ENCODE measurements at regions of chr5 and their contacts with region 1.

Region 1: DNA sequence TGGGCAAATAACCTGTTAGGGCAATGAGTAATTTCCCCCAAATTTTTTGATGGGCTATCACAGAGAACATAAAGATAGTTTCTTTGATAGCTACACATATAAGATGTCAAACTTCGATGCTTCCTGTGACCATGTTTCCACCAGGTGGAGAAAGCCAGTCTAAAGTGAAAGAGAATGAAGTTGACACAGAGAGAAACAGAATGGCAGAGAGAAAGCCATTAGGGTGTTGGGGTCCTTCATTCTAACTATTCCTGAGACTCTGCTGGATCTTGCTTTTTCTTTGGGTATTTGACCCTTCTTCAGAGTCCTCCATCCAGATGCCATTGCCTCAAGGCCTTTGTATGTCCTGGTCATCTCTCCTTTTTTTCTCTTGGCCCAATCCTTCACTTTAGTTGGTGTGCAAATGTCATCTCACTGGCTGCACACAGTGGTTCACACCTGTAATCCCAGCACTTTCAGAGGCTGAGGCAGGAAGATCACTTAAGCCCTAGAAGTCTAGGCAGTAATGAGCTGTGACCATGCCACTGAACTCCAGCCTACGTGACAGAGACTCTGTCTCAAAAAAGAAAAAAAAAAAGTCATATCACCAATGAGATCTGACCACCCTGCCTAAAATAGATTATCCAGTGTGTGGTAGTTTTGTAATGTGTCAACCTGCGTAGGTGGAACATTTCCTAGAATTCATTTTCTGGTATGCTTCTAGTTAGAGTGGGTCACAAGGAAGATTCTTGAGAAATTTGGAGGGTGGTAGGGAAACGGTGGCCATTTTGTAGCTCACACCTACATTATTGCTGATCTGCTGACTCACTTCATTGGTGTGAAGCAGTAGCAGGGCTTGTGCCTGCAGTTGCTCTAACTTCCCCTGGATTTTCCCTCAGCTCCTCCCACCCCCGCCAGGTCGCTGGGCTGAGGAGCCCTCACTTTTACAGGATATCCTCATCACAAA is 20.8 kb upstream of the KIF2A start:
- DNase-seq: peak; percentile 88
- H3K4me3 Mint-ChIP-seq: peak overlapping the region; percentile 65
- H3K27ac Mint-ChIP-seq: peak overlapping the region; percentile 98
- H3K4me1 Mint-ChIP-seq: peaks cover 69% of the 10 kb centered on the region
- H3K27me3 Mint-ChIP-seq: no peaks in the 10 kb centered on the region

Region 2: GRCh38 chr5:62256161-62257019 is 28.8 kb before region 1 on chr5:
- intact Hi-C with region 1: loop called (anchors 1 kb)
- DNase-seq: peak; percentile 76
- H3K4me3 Mint-ChIP-seq: peak overlapping the region; percentile 69
- H3K27ac Mint-ChIP-seq: peak overlapping the region; percentile 83
- H3K4me1 Mint-ChIP-seq: peaks cover 54% of the 10 kb centered on the region
- H3K27me3 Mint-ChIP-seq: no peaks in the 10 kb centered on the region

Region 3: GRCh38 chr5:62297026-62297425 is 11.8 kb after region 1 on chr5:
- intact Hi-C with region 1: loop called (anchors 1 kb)
- DNase-seq: peak; percentile 84
- H3K4me3 Mint-ChIP-seq: peak overlapping the region; percentile 73
- H3K27ac Mint-ChIP-seq: peak overlapping the region; percentile 83
- H3K4me1 Mint-ChIP-seq: peaks cover 60% of the 10 kb centered on the region
- H3K27me3 Mint-ChIP-seq: no peaks in the 10 kb centered on the region

Region 4: DNA sequence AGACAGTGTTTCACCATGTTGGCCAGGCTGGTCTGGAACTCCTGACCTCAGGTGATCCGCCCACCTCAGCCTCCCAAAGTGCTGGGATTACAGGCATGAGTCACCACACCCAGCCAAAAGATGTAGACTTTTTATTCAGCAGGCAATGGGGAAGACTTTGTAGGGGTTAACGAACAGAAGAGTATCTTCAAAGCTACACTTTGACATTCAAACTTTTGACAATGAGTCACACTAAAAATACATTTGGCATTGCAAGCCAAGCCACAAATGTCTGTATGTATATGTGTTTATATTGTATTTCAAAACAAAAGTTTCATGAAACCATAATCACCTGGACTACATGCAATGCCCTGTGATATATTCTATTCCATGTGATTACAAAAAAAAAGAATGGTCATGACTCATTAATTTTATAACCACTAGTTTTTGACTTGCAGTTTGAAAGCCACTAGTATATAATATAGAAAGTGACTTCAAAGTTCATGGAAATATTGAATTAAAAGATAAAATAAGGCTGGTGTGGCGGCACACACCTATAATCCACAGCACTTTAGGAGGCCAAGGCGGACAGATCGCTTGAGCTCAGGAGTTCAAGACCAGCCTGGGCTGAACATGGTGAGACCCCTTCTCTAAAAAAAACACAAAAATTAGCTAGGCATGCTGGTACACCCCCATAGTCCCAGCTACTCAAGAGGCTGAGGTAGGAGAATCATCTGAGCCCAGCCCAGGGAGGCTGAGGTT is 110.2 kb after region 1 on chr5:
- intact Hi-C with region 1: loop called (anchors 2 kb)
- DNase-seq: no peak
- H3K4me3 Mint-ChIP-seq: no peak overlapping the region
- H3K27ac Mint-ChIP-seq: peak overlapping the region; percentile 86
- H3K4me1 Mint-ChIP-seq: peaks cover 28% of the 10 kb centered on the region
- H3K27me3 Mint-ChIP-seq: no peaks in the 10 kb centered on the region

Region 5: DNA sequence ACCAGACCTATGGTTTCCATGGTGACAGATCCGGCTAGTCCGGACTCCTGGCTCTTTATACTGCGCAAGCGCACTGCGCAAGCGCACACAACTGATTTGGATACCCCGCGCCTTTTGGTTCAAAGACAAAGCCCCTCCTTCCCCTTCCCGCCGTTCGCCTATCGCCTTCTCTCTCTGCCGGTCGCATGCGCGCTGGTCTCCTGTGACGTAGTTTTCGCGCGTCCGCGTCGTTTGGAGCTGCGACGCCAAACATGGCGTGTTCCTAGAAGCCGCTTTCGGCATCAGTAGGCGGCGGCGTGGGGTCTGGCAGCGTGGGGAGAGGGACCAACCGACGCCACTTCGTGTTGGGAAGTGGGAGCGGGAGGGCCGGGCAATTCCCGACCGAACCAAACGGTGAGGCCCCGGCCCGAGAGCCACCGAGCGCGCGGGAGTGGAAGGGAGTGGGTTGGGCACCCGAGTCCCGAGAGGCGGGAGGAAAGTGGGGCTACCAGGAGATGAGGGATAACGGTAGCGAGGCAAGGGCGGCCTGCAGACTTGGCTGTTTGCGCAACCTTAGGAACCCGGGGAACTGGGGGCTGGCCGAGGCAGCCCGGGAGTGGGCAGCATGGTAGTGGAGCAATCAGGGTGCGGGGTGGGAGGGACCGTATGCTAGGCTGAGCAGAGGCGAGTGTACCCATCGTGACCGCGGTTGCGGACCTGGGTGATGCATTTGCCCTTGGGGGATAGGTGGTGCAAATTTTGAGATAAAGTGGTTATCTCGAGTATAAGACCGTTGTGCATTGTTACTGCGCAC is 127.5 kb after region 1 on chr5 and contains the start of gene IPO11:
- intact Hi-C with region 1: no loop called
- DNase-seq: peak; percentile 100
- H3K4me3 Mint-ChIP-seq: peak within 1 kb of the TSS; percentile 93
- H3K27ac Mint-ChIP-seq: peak within 1 kb of the TSS; percentile 95
- H3K4me1 Mint-ChIP-seq: peaks cover 20% of the 10 kb centered on the region
- H3K27me3 Mint-ChIP-seq: peaks cover 9% of the 10 kb centered on the region
- total RNA-seq, gene IPO11: 56.7 and 60.9 TPM in 2 replicates